Activated CD4-positive, alpha-beta memory T cell treated with anti-CD3 and anti-CD28 coated beads, Interleukin-2, amount 10 ng/mL, durations not matched to agents 7 days and 5 days (primary cell): ENCODE measurements at regions of chr9 and their contacts with region 1.

Region 1: DNA sequence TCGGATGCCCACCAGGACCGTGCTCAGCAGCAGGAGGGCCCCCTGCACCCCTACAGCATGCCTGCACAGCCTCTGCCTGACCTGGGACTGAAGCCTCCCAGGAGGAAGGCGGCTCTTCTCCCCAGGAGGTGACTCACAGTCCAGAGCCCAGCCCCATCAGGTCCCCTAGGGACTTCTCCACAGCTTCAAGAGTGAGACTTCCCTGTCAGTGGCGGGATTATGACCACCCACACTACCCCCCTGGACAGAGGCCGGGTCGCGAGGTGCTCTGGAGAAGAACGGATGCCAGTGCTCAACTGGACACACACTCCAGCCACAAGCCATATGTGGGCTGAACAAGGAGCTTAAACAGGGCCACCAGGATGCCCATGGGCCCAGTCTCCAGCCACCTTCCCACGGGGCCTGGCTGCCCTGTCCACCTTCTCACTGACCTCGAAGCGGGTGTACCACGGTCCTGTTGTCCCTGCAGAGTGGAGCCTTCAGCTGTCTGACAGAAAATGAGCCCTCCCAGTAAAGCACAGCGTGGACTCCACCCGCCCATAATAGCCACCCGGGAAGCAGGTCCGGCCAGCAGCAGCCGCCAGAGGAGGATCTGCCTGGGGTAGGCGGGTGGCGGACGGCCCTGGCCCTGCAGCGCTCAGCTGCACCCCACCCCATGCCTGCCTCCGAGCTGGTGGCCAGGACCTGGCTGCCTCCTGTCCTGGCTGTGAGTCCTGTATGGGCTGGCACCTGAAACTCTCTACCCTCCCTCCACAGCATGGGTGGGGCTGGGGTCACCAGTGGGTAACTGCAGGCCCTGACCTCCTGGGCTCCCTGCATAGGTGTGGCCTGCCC is 54.7 kb downstream of the SEMA4D start:
- DNase-seq: no peak
- H3K4me3 Mint-ChIP-seq: no peak overlapping the region
- H3K27ac Mint-ChIP-seq: no peak overlapping the region
- H3K4me1 Mint-ChIP-seq: peaks cover 88% of the 10 kb centered on the region
- H3K27me3 Mint-ChIP-seq: no peaks in the 10 kb centered on the region

Region 2: GRCh38 chr9:89310475-89311346 is 132.5 kb before region 1 on chr9 and contains the start of gene CKS2:
- CTCF ChIA-PET with region 1: no interaction called
- POLR2A ChIA-PET with region 1: no interaction called
- DNase-seq: peak; percentile 100
- H3K4me3 Mint-ChIP-seq: peak within 1 kb of the TSS; percentile 95
- H3K27ac Mint-ChIP-seq: peak within 1 kb of the TSS; percentile 98
- H3K4me1 Mint-ChIP-seq: peaks cover 47% of the 10 kb centered on the region
- H3K27me3 Mint-ChIP-seq: no peaks in the 10 kb centered on the region
- total RNA-seq, gene CKS2: 175 to 180 TPM

Region 3: GRCh38 chr9:89410641-89411350 is 32.4 kb before region 1 on chr9:
- CTCF ChIA-PET with region 1: no interaction called
- POLR2A ChIA-PET with region 1: interaction called, 13 read pairs
- DNase-seq: peak; percentile 56
- H3K4me3 Mint-ChIP-seq: peak overlapping the region; percentile 58
- H3K27ac Mint-ChIP-seq: peak overlapping the region; percentile 93
- H3K4me1 Mint-ChIP-seq: peaks cover 99% of the 10 kb centered on the region
- H3K27me3 Mint-ChIP-seq: no peaks in the 10 kb centered on the region

Region 4: GRCh38 chr9:89555451-89556375 is 112.5 kb after region 1 on chr9:
- CTCF ChIA-PET with region 1: no interaction called
- POLR2A ChIA-PET with region 1: no interaction called
- DNase-seq: no peak
- H3K4me3 Mint-ChIP-seq: no peak overlapping the region
- H3K27ac Mint-ChIP-seq: no peak overlapping the region
- H3K4me1 Mint-ChIP-seq: peaks cover 14% of the 10 kb centered on the region
- H3K27me3 Mint-ChIP-seq: peaks cover 31% of the 10 kb centered on the region